ENCODE measurements at regions of chr16 and their contacts with region 1.

Region 1: GRCh38 chr16:68902008-68902968 is 59.0 kb downstream of the TANGO6 start:
- DNase-seq: peak; percentile 43 to 56 (median 50)
- ATAC-seq: peak; percentile 82
- H3K4me3 ChIP-seq: no peak overlapping the region
- H3K27ac ChIP-seq: no peak overlapping the region
- H3K4me1 ChIP-seq: no peaks in the 10 kb centered on the region
- H3K27me3 ChIP-seq: no peaks in the 10 kb centered on the region
- CTCF ChIP-seq: peak; percentile 67 to 83 (median 70)
- EP300 ChIP-seq: no peak
- POLR2A ChIP-seq: no peak
- RAD21 ChIP-seq: peak; percentile 66 to 87

Region 2: GRCh38 chr16:69105489-69106361 is 203.4 kb after region 1 on chr16 and contains the start of gene HAS3:
- CTCF ChIA-PET with region 1: interaction called, 20 read pairs
- POLR2A ChIA-PET with region 1: no interaction called
- in situ Hi-C with region 1: no loop called
- intact Hi-C with region 1: loop called (anchors 1 kb)
- DNase-seq: peak; percentile 61 to 85 (median 79)
- ATAC-seq: peak; percentile 87
- H3K4me3 ChIP-seq: peak within 1 kb of the TSS; percentile 65
- H3K27ac ChIP-seq: no peak within 1 kb of the TSS; the same call in 2 of the 3 replicates
- H3K4me1 ChIP-seq: peaks cover 0 to 25% of the 10 kb centered on the region in 2 experiments; a peak in 3 of 5 replicates
- H3K27me3 ChIP-seq: peaks cover 2 to 8% of the 10 kb centered on the region in 2 experiments; a peak in 1 of 5 replicates
- CTCF ChIP-seq: peak; percentile 60 to 89 (median 71)
- EP300 ChIP-seq: no peak
- POLR2A ChIP-seq: no peak
- RAD21 ChIP-seq: peak; percentile 69 to 88
- polyA plus RNA-seq, gene HAS3: 0.04 TPM in 1 of 2 experiments, not detected in the other

Region 3: GRCh38 chr16:69123910-69124309 is 221.6 kb after region 1 on chr16:
- CTCF ChIA-PET with region 1: interaction called, 14 read pairs
- POLR2A ChIA-PET with region 1: interaction called, 4 read pairs
- in situ Hi-C with region 1: loop called (anchors 5 kb)
- intact Hi-C with region 1: no loop called
- DNase-seq: peak; percentile 39 to 80 (median 44)
- ATAC-seq: peak; percentile 79
- H3K4me3 ChIP-seq: no peak overlapping the region
- H3K27ac ChIP-seq: no peak overlapping the region
- H3K4me1 ChIP-seq: peaks cover 0 to 4% of the 10 kb centered on the region in 2 experiments; a peak in 2 of 5 replicates
- H3K27me3 ChIP-seq: no peaks in the 10 kb centered on the region
- CTCF ChIP-seq: peak; percentile 59 to 81 (median 70)
- EP300 ChIP-seq: no peak
- POLR2A ChIP-seq: no peak
- RAD21 ChIP-seq: peak; percentile 42 to 67

Region 4: DNA sequence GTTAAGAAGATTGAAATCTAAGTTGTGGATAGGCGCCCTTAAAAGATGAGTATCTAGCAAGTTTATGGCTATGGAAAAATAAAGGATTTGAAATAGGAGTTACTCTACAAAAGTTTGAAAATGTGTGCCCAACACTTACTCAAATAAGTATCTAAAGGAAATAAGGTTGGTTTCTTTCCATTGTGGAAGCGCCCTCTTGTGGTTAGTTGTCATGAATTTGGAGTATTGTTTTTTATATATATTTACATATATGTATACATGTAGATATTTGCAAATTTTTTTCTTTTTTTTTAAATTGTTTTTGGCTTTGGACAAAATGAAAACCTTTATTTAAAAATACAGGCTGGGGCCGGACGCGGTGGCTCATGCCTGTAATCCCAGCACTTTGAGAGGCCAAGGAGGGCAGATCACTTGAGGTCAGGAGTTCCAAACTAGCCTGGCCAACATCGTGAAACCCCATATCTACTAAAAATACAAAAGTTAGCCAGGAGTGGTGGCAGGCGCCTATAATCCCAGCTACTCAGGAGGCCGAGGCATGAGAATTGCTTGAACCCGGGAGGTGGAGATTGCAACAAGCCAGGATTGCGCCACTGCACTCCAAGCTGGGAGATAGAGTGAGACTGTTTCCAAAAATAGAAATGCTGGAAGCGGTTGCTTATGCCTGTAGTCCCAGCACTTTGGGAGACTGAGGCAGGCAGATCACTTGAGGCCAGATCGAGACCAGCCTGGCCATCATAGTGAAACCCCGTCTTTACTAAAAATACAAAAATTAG is 384.8 kb after region 1 on chr16:
- CTCF ChIA-PET with region 1: interaction called, 4 read pairs
- POLR2A ChIA-PET with region 1: no interaction called
- in situ Hi-C with region 1: no loop called
- intact Hi-C with region 1: loop called (anchors 10 kb)
- DNase-seq: peak; percentile 30 to 70 (median 33)
- ATAC-seq: peak; percentile 68
- H3K4me3 ChIP-seq: no peak overlapping the region
- H3K27ac ChIP-seq: no peak overlapping the region
- H3K4me1 ChIP-seq: peaks cover 2 to 4% of the 10 kb centered on the region in 2 experiments; a peak in 1 of 5 replicates
- H3K27me3 ChIP-seq: no peaks in the 10 kb centered on the region
- CTCF ChIP-seq: peak in 2 of 3 experiments; percentile 41 to 80; a peak in 4 of 6 replicates
- EP300 ChIP-seq: no peak
- POLR2A ChIP-seq: no peak
- RAD21 ChIP-seq: peak; percentile 70